ENCODE measurements at regions of chr9 and their contacts with region 1.

Region 1: GRCh38 chr9:89805661-89806292 is 201.0 kb downstream of the GADD45G start:
- DNase-seq: no peak
- H3K4me3 ChIP-seq: no peak overlapping the region
- H3K27ac ChIP-seq: no peak overlapping the region
- H3K4me1 ChIP-seq: peaks cover 3 to 14% (median 8%) of the 10 kb centered on the region in 4 experiments
- H3K27me3 ChIP-seq: no peaks in the 10 kb centered on the region; a peak in 1 of 7 replicates
- CTCF ChIP-seq: no peak
- EP300 ChIP-seq: no peak
- POLR2A ChIP-seq: no peak
- RAD21 ChIP-seq: no peak

Region 2: GRCh38 chr9:89815903-89816573 is 10.3 kb after region 1 on chr9:
- CTCF ChIA-PET with region 1: interaction called, 11 read pairs
- POLR2A ChIA-PET with region 1: no interaction called
- DNase-seq: no peak
- H3K4me3 ChIP-seq: no peak overlapping the region
- H3K27ac ChIP-seq: no peak overlapping the region
- H3K4me1 ChIP-seq: no peaks in the 10 kb centered on the region; a peak in 1 of 7 replicates
- H3K27me3 ChIP-seq: peaks cover 0 to 2% (median 0%) of the 10 kb centered on the region in 4 experiments; a peak in 1 of 7 replicates
- CTCF ChIP-seq: no peak
- EP300 ChIP-seq: no peak
- POLR2A ChIP-seq: no peak
- RAD21 ChIP-seq: no peak

Region 3: GRCh38 chr9:89999534-90000370 is 194.0 kb after region 1 on chr9:
- CTCF ChIA-PET with region 1: no interaction called
- POLR2A ChIA-PET with region 1: no interaction called
- DNase-seq: no peak
- H3K4me3 ChIP-seq: no peak overlapping the region
- H3K27ac ChIP-seq: no peak overlapping the region
- H3K4me1 ChIP-seq: peaks cover 0 to 10% (median 2%) of the 10 kb centered on the region in 4 experiments; a peak in 6 of 7 replicates
- H3K27me3 ChIP-seq: no peaks in the 10 kb centered on the region
- CTCF ChIP-seq: no peak
- EP300 ChIP-seq: no peak
- POLR2A ChIP-seq: no peak
- RAD21 ChIP-seq: no peak